GM13977 (cell line): ENCODE measurements at regions of chr2 and their contacts with region 1.

Region 1: DNA sequence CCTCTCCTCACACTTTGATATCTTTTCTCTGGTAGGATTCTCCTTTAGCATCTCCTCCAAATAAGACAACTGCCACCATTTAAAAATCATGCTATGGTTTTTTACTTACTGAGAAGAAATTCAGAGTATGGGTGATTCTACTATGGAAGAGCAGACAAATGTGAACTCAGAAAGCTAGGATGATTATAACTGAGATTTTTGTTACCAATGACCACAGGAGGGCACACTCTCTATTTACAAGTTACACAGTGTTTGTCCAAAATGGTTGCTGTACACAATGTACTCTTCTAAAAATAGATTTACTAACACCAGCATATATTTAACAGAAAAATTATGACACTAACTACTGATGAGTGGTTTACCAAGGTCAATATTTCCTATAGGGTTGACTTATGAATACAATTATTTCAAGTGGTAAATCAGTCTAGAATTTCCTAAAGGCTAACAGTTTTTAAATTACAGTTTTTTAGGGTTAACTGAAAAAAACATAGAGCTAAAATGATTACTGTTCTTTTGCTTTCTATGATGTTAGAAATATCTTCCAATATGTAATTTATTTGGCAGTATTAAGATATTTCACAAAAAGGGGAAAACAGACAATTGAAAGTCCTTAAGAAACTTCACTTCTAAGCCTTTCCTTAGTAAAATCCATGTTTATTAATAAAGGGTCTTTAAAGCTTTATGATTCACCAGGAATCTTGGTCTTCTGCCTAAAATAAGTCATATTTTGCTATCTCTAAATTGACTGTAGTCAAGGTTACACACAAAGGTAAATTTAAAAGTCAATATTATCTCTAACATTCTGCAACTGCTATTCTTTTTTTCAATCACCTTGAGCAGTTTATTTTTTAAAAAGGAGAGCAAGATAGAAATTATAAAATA is 57.2 kb downstream of the MAP4K3 start:
- DNase-seq: peak; percentile 48
- CTCF ChIP-seq: peak; percentile 48

Region 2: DNA sequence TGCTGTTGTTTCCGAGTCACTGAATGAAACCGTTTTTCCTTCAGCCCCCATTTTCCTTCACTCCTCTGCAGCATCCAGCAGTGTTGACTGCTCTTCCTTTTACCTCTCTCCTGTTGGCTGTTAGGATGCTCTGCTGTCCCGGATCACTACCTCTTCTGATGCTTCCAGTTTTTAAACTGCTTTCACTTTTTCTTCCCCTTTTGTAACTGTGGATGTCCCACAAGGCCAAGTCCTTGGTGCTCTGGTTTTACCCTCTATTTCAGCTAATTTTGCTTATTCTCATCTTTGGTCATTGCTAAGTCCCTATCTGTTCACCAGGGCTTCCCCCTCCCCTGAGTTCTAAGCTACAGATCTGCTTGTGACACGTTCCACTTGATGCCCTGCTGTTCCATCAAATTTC is 96.6 kb after region 1 on chr2:
- in situ Hi-C with region 1: no loop called
- DNase-seq: peak; percentile 17
- CTCF ChIP-seq: no peak

Region 3: DNA sequence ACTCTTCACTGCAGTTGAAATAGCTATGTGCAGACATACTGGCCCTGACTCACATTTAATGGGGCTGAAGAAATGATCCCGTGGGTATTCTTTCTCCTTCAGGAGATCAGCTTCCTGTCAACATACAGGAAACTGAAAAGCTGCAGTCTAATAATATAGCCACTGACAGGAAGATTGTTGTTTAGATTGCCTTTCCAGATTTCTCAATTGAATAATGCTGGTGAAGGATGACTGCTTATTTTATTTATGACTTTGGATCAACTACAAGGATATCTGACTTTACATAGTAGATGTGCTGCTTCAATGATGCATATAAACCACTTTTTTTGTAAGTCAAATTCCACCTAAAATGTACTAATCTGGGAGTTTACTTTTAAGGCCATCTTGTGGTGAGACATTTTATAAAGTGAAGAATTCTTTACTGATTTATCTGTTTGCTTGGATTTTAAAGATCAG is 150.6 kb after region 1 on chr2:
- in situ Hi-C with region 1: no loop called
- DNase-seq: no peak
- CTCF ChIP-seq: no peak

Region 4: DNA sequence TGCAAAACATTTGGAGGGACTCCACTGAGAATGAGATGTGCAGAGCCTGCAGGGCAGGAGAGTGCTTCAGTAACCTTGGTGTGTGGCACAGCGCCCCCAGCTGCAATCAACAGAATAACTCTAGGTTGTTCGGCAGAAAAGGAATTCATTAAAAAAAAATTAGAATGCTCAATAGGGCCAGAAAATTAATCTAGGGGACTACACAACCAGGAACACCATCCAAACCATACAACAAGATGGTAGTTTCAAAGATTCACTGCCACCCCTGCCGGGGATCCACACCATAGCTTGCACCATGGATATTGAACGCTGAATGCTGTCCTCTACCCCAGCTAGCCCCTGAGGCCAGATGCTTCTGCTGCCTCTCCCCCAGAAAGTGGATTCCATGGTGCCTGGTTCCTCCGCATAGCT is 349.1 kb after region 1 on chr2:
- in situ Hi-C with region 1: loop called (anchors 10 kb)
- DNase-seq: peak; percentile 22
- CTCF ChIP-seq: peak; percentile 75